ENCODE measurements at regions of chr11 and their contacts with region 1.

Region 1: DNA sequence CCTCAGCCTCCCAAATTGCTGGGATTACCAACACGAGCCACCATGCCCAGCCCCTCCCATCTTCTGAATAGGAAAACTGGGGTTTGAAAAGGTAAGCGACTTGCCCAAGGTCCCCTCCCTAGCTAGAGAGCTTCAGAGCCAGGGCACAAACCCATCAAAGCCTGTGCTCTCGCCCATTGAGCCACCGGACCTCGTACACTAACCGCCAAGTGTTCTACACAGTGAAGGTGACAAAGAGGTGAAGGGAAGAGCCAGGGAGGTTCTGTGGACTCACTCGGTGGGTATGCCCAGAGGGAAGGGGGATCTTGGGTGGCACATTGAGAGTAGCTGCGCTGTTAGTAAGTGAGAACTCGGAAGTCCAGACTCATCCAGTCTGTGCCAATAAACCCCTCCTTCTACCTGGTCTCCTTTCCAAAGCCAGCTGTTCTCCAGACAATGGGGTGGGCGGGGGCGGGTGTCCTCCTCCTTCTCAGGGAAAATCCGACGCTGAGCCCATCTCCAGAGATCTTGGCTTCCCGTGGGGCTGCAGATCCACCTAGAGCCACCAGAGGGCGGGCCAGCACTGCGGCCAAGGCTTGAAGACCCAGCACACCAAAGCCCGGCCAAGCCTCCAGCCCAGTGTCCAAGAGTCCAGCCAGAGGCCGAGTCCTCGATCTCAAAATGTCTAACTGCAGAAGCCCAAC is 3.2 kb upstream of the RTN4RL2 start:
- DNase-seq: peak; percentile 84 to 94 (median 91)
- H3K4me3 ChIP-seq: no peak overlapping the region
- H3K27ac ChIP-seq: no peak overlapping the region
- H3K4me1 ChIP-seq: peaks cover 9% of the 10 kb centered on the region
- H3K27me3 ChIP-seq: peaks cover 6% of the 10 kb centered on the region
- CTCF ChIP-seq: peak; percentile 93 to 98 (median 95)
- EP300 ChIP-seq: no peak
- POLR2A ChIP-seq: no peak

Region 2: DNA sequence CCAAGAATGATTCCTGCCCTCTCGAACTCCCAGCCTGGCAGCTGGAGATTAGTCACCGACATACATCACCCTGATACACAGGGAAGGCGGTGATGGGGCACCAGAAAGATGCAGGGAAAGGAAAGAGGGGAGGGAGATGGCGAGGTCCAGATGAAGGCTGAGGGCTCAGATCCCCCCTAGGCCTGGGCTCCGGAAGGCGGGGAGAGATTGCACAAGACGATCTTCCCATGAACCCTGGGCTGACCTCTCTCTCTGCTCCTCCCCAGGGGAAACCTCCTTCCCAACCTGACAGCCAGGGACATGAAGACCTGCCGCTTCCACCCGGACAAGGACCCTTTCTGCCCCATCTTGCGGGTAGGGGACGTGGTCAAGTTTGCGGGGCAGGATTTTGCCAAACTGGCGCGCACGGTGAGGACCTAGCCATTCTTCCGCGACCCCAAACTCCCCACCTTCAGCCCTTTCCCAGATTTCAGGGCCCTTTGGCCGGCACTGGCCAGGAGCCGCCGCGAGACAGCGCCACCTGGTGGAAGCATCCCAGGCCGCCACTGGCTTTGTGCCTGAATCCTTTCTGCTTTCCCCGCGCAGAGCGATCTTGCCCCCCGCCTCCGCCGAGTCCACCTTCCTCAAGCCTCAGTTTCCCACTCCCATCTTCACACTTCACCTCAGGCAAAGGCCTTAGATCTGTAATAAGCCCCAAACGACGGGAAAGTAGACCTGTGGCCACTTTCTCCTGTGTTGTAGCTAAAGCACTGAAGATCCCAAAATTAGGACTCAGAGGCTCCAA is 107.4 kb before region 1 on chr11:
- intact Hi-C with region 1: loop called in 1 of 4 experiments (anchors 10 kb)
- DNase-seq: peak; percentile 58 to 82 (median 74)
- H3K4me3 ChIP-seq: no peak overlapping the region
- H3K27ac ChIP-seq: no peak overlapping the region
- H3K4me1 ChIP-seq: peaks cover 3% of the 10 kb centered on the region
- H3K27me3 ChIP-seq: no peaks in the 10 kb centered on the region
- CTCF ChIP-seq: peak; percentile 70 to 78 (median 74)
- EP300 ChIP-seq: no peak
- POLR2A ChIP-seq: no peak

Region 3: GRCh38 chr11:57523419-57523818 is 66.3 kb after region 1 on chr11:
- intact Hi-C with region 1: loop called (anchors 2 to 10 kb)
- DNase-seq: no peak
- H3K4me3 ChIP-seq: no peak overlapping the region
- H3K27ac ChIP-seq: no peak overlapping the region
- H3K4me1 ChIP-seq: no peaks in the 10 kb centered on the region
- H3K27me3 ChIP-seq: no peaks in the 10 kb centered on the region
- CTCF ChIP-seq: no peak
- EP300 ChIP-seq: no peak
- POLR2A ChIP-seq: no peak

Region 4: GRCh38 chr11:57530596-57531507 is 73.8 kb after region 1 on chr11 and contains the start of gene TIMM10:
- intact Hi-C with region 1: loop called in 3 of 4 experiments (anchors 2 to 10 kb)
- DNase-seq: peak; percentile 93 to 95 (median 93)
- H3K4me3 ChIP-seq: peak within 1 kb of the TSS; percentile 63
- H3K27ac ChIP-seq: peak within 1 kb of the TSS in 1 of 2 donors; percentile 3
- H3K4me1 ChIP-seq: peaks cover 4% of the 10 kb centered on the region
- H3K27me3 ChIP-seq: no peaks in the 10 kb centered on the region
- CTCF ChIP-seq: no peak
- EP300 ChIP-seq: no peak
- POLR2A ChIP-seq: no peak
- total RNA-seq, gene TIMM10: 23.4 to 42.0 (median 38.0) TPM

Region 5: GRCh38 chr11:57644748-57645688 is 187.9 kb after region 1 on chr11:
- intact Hi-C with region 1: loop called in 1 of 4 experiments (anchors 10 kb)
- DNase-seq: peak; percentile 77 to 91 (median 83)
- H3K4me3 ChIP-seq: no peak overlapping the region
- H3K27ac ChIP-seq: peak overlapping the region; percentile 7 to 59
- H3K4me1 ChIP-seq: peaks cover 29% of the 10 kb centered on the region
- H3K27me3 ChIP-seq: no peaks in the 10 kb centered on the region
- CTCF ChIP-seq: peak; percentile 67 to 81 (median 70)
- EP300 ChIP-seq: no peak
- POLR2A ChIP-seq: no peak

Region 6: DNA sequence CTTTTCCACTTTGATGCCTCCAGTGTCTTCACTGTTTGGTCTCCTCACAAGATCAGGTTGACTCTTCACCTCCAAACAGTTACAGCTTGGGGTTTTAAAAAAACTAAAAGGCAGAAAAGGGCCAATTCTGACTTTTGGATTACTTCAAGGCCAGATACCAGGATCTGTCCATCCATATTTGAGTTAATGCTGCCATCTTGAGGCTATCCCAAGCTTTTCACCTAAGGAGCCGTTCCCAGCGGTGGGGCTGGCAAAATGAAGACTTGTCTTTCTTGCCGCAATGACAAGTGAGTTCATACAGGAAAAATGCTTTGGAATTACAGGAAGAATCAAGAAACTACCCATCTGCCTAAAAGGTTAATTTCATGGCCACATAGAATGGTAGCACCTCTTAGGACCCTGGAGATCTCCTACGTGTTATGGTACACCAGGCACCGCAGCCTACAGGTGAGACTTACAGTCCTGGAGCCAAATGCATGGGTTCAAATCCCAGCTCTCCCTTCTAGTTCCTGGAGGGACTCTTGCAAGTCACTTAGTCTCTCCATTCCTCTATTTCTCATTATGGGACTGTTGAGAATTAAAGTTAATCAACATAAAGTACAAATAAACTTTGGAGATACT is 1056.8 kb after region 1 on chr11:
- intact Hi-C with region 1: loop called in 1 of 4 experiments (anchors 10 kb)
- DNase-seq: no peak
- H3K4me3 ChIP-seq: no peak overlapping the region
- H3K27ac ChIP-seq: no peak overlapping the region
- H3K4me1 ChIP-seq: no peaks in the 10 kb centered on the region
- H3K27me3 ChIP-seq: no peaks in the 10 kb centered on the region
- CTCF ChIP-seq: peak in 1 of 3 donors; percentile 43
- EP300 ChIP-seq: no peak
- POLR2A ChIP-seq: no peak

Measured in ovary (tissue), 10 donors.